Activated CD8-positive, alpha-beta memory T cell treated with anti-CD3 and anti-CD28 coated beads, Interleukin-2, amount 10 ng/mL, durations not matched to agents 7 days and 5 days (primary cell): ENCODE measurements at regions of chr6 and their contacts with region 1.

Region 1: GRCh38 chr6:127539272-127539671 is 20.1 kb upstream of the MTCL3 start:
- DNase-seq: no peak
- ATAC-seq: no peak
- H3K4me3 Mint-ChIP-seq: no peak overlapping the region
- H3K27ac Mint-ChIP-seq: no peak overlapping the region
- H3K4me1 Mint-ChIP-seq: peaks cover 13% of the 10 kb centered on the region
- H3K27me3 Mint-ChIP-seq: peaks cover 27% of the 10 kb centered on the region

Region 2: GRCh38 chr6:127302728-127303660 is 236.3 kb before region 1 on chr6:
- CTCF ChIA-PET with region 1: interaction called, 18 read pairs
- DNase-seq: peak; percentile 58
- ATAC-seq: peak; percentile 60
- H3K4me3 Mint-ChIP-seq: no peak overlapping the region
- H3K27ac Mint-ChIP-seq: no peak overlapping the region
- H3K4me1 Mint-ChIP-seq: peaks cover 11% of the 10 kb centered on the region
- H3K27me3 Mint-ChIP-seq: no peaks in the 10 kb centered on the region

Region 3: DNA sequence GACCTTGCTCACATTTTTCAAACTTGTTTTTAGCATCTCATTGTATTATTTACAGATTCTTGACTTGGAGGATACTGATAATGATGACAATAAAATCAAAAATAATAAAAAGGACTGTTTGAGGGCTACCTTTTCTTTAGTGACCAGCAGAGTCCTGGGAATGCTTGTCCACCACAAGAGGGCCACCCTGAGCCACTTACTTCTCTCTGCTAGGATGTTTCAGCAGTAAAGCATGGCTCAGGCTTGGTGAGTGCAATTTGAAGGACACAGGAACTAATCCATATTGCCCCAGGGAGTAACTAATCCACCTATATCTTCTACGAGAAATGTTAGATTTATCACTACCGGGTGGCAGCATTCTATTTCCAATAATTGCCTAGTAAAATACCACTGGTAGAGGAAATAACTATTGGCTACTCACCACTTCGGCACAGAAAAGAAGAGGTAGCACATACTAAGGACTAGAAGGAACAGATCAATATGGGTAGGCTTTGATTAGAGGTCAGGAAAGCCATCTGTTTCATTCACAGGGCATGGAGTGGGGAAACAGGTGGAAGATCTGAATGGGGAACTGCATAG is 74.3 kb before region 1 on chr6:
- CTCF ChIA-PET with region 1: interaction called, 65 read pairs
- DNase-seq: peak; percentile 79
- ATAC-seq: peak; percentile 84
- H3K4me3 Mint-ChIP-seq: no peak overlapping the region
- H3K27ac Mint-ChIP-seq: no peak overlapping the region
- H3K4me1 Mint-ChIP-seq: peaks cover 15% of the 10 kb centered on the region
- H3K27me3 Mint-ChIP-seq: no peaks in the 10 kb centered on the region

Region 4: DNA sequence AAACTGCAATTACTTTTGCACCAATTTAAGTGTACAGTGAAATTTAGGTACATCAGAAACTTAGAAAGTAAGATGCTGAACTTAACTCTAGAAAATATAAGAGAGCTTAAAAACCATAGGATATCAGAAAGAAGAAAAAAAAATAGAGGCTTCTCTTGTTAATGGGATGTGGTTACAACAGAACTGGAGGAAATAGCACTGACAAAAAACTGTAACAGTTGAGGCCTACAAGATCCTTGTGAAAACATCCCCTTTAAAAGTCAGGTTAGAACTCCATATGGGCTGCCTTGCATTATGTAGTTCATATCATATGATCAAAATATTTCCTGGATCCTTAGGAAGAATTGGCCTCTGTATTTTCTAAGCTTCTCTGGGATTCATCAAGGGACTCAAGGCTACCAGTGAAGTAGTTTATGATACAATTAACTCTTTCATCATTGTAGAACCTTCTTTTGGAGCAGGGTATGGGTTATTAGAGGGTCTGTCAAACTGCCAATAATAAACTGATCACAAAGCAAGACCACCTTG is 45.0 kb before region 1 on chr6:
- CTCF ChIA-PET with region 1: no interaction called
- DNase-seq: no peak
- ATAC-seq: peak; percentile 45
- H3K4me3 Mint-ChIP-seq: no peak overlapping the region
- H3K27ac Mint-ChIP-seq: no peak overlapping the region
- H3K4me1 Mint-ChIP-seq: peaks cover 20% of the 10 kb centered on the region
- H3K27me3 Mint-ChIP-seq: no peaks in the 10 kb centered on the region